Activated naive CD4-positive, alpha-beta T cell treated with anti-CD3 and anti-CD28 coated beads for 36 hours (primary cell): ENCODE measurements at regions of chr6 and their contacts with region 1.

Region 1: GRCh38 chr6:134288538-134289203 is 29.2 kb downstream of the SGK1 start:
- DNase-seq: no peak
- H3K4me3 Mint-ChIP-seq: peak overlapping the region; percentile 45
- H3K27ac Mint-ChIP-seq: peak overlapping the region; percentile 90
- H3K4me1 Mint-ChIP-seq: peaks cover 28% of the 10 kb centered on the region
- H3K27me3 Mint-ChIP-seq: no peaks in the 10 kb centered on the region

Region 2: GRCh38 chr6:134041093-134041492 is 247.6 kb before region 1 on chr6:
- CTCF ChIA-PET with region 1: no interaction called
- intact Hi-C with region 1: no loop called
- DNase-seq: no peak
- H3K4me3 Mint-ChIP-seq: no peak overlapping the region
- H3K27ac Mint-ChIP-seq: no peak overlapping the region
- H3K4me1 Mint-ChIP-seq: peaks cover 1% of the 10 kb centered on the region
- H3K27me3 Mint-ChIP-seq: peaks cover 3% of the 10 kb centered on the region

Region 3: DNA sequence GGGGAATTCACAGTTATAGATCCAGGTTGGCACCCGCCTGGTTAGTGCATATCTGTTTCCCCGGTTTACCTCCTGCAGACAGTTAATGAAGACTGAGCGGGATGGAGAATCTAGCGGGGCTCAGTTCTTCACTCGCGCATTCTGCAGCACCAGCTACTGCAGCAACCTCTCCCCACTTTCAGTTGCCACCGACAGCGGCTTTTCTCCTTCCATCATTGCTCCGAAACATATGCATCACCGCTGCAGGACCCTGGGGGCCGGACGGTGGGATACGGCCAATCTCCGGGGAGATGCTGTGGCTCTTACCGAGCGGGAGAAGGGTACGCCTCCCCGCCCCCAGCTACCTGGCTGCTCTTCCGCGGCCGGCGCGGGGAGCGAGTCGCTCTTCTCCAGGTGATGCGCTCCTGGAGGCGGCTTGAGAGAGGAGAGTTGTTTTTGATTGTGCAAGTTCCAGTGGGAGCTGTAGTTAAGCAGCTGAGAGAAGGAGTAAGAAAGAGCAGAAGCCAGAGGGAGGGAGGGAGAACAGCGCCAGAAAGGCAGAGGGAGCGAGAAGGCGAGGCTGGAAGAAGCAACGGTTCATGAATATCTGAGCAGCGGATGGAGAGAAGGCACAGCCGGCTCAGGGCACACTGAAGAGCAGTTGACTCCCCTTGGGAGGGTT is 28.9 kb after region 1 on chr6 and contains the start of gene SGK1:
- CTCF ChIA-PET with region 1: no interaction called
- intact Hi-C with region 1: loop called (anchors 1 kb)
- DNase-seq: peak; percentile 43
- H3K4me3 Mint-ChIP-seq: peak within 1 kb of the TSS; percentile 85
- H3K27ac Mint-ChIP-seq: peak within 1 kb of the TSS; percentile 14
- H3K4me1 Mint-ChIP-seq: peaks cover 36% of the 10 kb centered on the region
- H3K27me3 Mint-ChIP-seq: peaks cover 21% of the 10 kb centered on the region
- total RNA-seq, gene SGK1: 202 to 208 TPM

Region 4: GRCh38 chr6:134373282-134373922 is 84.7 kb after region 1 on chr6:
- CTCF ChIA-PET with region 1: no interaction called
- intact Hi-C with region 1: loop called (anchors 1 kb)
- DNase-seq: peak; percentile 61
- H3K4me3 Mint-ChIP-seq: no peak overlapping the region
- H3K27ac Mint-ChIP-seq: peak overlapping the region; percentile 4
- H3K4me1 Mint-ChIP-seq: peaks cover 38% of the 10 kb centered on the region
- H3K27me3 Mint-ChIP-seq: no peaks in the 10 kb centered on the region

Region 5: GRCh38 chr6:134436281-134436815 is 147.7 kb after region 1 on chr6:
- CTCF ChIA-PET with region 1: no interaction called
- intact Hi-C with region 1: loop called (anchors 1 kb)
- DNase-seq: peak; percentile 88
- H3K4me3 Mint-ChIP-seq: peak overlapping the region; percentile 44
- H3K27ac Mint-ChIP-seq: peak overlapping the region; percentile 86
- H3K4me1 Mint-ChIP-seq: peaks cover 31% of the 10 kb centered on the region
- H3K27me3 Mint-ChIP-seq: no peaks in the 10 kb centered on the region

Region 6: DNA sequence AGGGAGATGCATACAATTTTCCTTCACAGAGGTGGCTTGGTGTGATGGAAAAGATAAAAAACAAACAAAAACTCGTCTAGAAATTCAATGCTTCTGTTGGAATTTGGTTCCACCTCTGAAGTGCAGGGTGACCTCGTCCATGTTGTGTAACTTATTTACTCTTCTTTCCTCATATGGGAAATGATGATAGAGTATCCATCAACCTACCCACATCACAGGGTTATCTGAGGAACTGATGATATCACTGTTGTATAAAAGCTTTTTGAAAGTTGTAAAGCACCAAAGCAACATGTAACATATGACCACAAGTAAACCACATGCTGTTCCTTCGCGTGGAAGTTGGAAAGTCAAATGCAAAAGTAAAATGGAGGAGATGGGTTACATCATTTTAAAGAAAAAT is 241.2 kb after region 1 on chr6:
- CTCF ChIA-PET with region 1: no interaction called
- intact Hi-C with region 1: loop called (anchors 1 kb)
- DNase-seq: no peak
- H3K4me3 Mint-ChIP-seq: no peak overlapping the region
- H3K27ac Mint-ChIP-seq: no peak overlapping the region
- H3K4me1 Mint-ChIP-seq: peaks cover 27% of the 10 kb centered on the region
- H3K27me3 Mint-ChIP-seq: no peaks in the 10 kb centered on the region